Mammary epithelial cell (primary cell): ENCODE measurements at regions of chr7 and their contacts with region 1.

Region 1: GRCh38 chr7:44847508-44847920 is 373 bp downstream of the H2AZ2 start:
- DNase-seq: peak; percentile 83
- H3K4me3 ChIP-seq: peak overlapping the region; percentile 55 to 96 (median 94)
- H3K27ac ChIP-seq: peak overlapping the region; percentile 84
- H3K4me1 ChIP-seq: peaks cover 5% of the 10 kb centered on the region
- H3K27me3 ChIP-seq: no peaks in the 10 kb centered on the region
- CTCF ChIP-seq: peak; percentile 47 to 96

Region 2: DNA sequence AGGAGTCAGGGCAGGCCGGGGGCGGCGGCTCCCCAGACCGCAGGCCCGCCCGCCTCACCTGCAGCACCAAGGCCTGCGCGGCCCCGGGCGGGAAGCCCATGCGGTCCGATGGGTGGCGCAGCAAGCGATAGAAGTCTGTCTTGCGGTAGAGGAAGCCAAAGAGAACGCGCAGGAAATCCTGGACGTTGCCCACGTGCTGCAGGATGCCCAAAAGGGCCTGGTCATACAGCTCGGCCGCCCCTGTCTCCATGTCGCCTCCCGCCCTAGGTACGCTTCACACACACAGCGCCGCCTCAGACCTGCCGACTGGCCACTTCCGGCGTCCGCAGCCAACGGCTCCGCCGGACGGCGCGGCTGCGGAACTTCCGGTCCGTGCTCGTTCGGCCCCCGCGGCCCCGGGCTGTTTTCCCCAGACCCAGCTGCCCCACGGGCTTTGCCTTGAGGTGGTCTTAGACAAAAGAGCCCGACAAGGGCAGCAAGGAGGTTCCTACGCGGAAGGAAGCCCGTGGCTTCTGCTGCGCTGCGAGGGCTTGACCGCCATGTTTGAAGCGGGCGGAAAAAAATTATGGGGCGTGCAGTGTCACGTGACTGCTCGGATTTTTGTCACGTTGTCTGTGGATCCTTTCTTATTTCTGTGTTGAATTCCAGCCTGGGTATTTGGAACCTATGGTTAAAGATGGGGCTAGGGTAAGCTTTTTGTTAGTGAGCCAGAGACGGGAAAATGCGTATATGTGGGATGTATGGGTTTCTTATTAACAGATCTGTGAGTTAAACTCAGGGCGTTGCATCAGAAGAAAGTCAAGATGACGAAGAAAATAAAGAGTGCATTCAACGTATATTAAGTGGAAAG is 356.9 kb before region 1 on chr7 and contains the start of gene NUDCD3:
- CTCF ChIA-PET with region 1: no interaction called
- dilution Hi-C with region 1: no loop called
- in situ Hi-C with region 1: no loop called
- intact Hi-C with region 1: loop called (anchors 10 kb)
- DNase-seq: peak; percentile 87
- H3K4me3 ChIP-seq: peak within 1 kb of the TSS; percentile 68 to 87 (median 83)
- H3K27ac ChIP-seq: peak within 1 kb of the TSS; percentile 97
- H3K4me1 ChIP-seq: peaks cover 19% of the 10 kb centered on the region
- H3K27me3 ChIP-seq: no peaks in the 10 kb centered on the region
- CTCF ChIP-seq: peak in 1 of 2 donors; percentile 32
- total RNA-seq, gene NUDCD3: 77.2 to 122 TPM

Region 3: DNA sequence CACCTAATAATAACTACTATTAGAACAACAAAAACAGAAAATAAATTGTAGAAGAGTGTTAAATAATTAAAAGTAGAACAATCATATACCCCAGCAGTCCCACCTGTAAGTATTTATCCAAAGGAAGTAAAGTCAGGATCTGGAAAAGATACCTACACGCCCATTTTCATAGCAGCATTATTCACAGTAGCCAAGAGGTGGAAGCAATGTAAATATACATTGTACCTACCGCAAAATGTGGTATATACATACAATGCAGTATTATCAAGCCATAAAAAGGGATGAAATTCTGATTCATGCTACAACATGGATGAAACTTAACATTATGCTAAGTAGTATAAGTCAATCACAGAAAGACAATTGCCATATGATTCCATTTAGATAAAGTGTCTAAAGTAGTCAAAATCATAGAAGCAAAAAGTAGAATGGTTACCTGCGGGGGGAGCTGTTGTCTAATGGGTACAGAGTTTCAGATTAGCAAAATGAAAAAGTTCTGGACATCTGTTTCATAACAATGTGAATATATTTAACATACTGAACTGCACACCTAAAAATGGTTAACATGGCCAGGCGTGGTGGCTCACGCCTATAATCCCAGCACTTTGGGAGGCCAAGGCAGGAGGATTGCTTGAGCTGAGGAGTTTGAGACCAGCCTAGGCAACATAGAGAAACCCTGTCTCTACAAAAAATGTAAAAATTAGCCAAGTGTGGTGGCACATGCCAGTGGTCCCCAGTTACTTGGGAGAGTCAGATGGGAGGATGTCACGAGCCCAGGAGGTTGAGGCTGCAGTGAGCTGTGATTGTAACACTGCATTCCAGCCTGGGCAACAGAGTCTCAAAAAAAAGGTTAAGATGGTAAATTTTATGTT is 259.4 kb before region 1 on chr7:
- CTCF ChIA-PET with region 1: no interaction called
- dilution Hi-C with region 1: no loop called
- in situ Hi-C with region 1: loop called (anchors 10 to 25 kb)
- intact Hi-C with region 1: loop called (anchors 1 kb)
- DNase-seq: peak; percentile 51
- H3K4me3 ChIP-seq: no peak overlapping the region
- H3K27ac ChIP-seq: no peak overlapping the region
- H3K4me1 ChIP-seq: peaks cover under 1% of the 10 kb centered on the region
- H3K27me3 ChIP-seq: no peaks in the 10 kb centered on the region
- CTCF ChIP-seq: peak; percentile 54 to 71

Region 4: DNA sequence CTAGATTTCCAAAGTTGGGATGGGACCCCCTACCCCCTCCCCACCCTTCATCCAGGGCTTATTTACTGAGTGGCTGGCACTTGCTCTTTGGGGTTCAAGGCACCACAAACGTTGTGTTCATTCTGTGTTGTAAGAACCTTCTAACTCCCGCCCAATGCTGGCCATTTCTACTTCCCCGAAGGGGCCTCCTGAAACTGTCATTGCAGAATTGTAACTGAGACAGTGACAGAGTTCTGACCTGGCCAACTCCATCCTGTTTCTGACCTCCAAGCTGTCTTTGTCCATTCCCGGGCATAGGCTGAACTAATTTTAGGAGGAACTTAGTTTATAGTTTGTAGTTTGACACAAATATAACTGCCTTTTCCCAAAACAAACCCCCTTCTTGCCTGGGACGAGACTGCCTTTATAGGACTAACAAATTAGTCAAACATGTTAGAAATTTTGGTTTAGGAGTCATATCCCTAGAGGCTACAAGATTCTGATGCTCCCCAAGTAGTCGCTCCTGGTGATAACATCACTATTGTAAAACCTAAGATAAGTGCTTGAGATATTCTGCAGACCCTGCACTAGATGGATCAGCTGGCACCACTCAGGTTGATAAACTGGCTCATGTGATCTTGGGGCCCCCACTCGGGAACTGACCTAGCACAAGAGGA is 133.7 kb before region 1 on chr7:
- CTCF ChIA-PET with region 1: no interaction called
- dilution Hi-C with region 1: no loop called
- in situ Hi-C with region 1: no loop called
- intact Hi-C with region 1: no loop called
- DNase-seq: no peak
- H3K4me3 ChIP-seq: no peak overlapping the region
- H3K27ac ChIP-seq: no peak overlapping the region
- H3K4me1 ChIP-seq: no peaks in the 10 kb centered on the region
- H3K27me3 ChIP-seq: no peaks in the 10 kb centered on the region
- CTCF ChIP-seq: no peak

Region 5: DNA sequence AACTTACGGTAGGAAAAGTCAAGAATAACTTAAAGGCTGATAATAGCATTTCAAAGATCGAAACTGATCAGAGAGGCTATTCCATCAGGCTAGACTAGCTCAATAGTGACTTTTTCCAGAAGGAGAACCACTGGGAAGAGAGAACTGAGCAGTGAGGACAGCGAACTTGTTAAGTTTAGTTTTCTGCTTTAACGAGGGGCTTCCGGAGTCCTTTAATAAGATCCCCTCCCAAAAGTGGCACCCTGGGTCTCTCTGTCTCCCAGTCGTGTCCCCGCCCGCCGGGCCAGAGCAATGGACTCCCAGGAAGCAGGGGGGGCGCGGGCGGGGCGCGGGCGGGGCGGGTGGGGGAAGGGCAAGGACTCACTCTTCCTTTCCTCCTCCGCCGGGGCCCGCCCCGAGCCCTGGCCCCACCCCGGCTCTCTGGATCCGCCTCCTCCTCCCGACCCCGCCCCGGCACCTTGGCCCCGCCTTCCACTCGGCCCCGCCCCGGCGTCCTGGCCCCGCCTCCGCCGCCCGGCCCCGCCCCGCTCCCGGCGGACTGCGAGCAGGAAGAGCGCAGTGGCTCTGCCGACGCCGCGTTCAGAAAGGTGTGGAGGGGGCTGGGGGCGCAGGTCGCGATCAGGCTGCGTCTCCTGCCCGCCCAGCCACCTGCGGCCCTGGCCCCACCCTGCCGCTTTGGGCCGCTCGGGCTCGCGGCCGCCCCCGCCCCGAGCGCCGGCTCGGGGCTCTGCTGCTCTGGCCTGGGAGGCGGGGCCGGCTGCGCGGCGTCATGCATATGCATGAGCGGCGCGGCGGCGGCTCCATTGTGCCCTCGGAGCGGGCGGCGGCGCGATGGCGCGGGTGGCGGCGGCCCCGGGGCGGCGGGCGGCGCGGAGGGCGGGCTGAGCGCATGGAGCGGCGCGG is 99.2 kb before region 1 on chr7 and contains the start of gene ZMIZ2:
- CTCF ChIA-PET with region 1: no interaction called
- dilution Hi-C with region 1: no loop called
- in situ Hi-C with region 1: no loop called
- intact Hi-C with region 1: loop called (anchors 2 kb)
- DNase-seq: peak; percentile 83
- H3K4me3 ChIP-seq: peak within 1 kb of the TSS; percentile 44 to 97 (median 91)
- H3K27ac ChIP-seq: peak within 1 kb of the TSS; percentile 66
- H3K4me1 ChIP-seq: peaks cover 27% of the 10 kb centered on the region
- H3K27me3 ChIP-seq: no peaks in the 10 kb centered on the region
- CTCF ChIP-seq: no peak
- total RNA-seq, gene ZMIZ2: 8.0 to 55.6 TPM

Region 6: GRCh38 chr7:44805950-44806349 is 41.6 kb before region 1 on chr7:
- CTCF ChIA-PET with region 1: no interaction called
- dilution Hi-C with region 1: no loop called
- in situ Hi-C with region 1: no loop called
- intact Hi-C with region 1: no loop called
- DNase-seq: no peak
- H3K4me3 ChIP-seq: no peak overlapping the region
- H3K27ac ChIP-seq: no peak overlapping the region
- H3K4me1 ChIP-seq: peaks cover 9% of the 10 kb centered on the region
- H3K27me3 ChIP-seq: no peaks in the 10 kb centered on the region
- CTCF ChIP-seq: no peak

Region 7: GRCh38 chr7:44875241-44875640 is 27.7 kb after region 1 on chr7:
- CTCF ChIA-PET with region 1: no interaction called
- dilution Hi-C with region 1: no loop called
- in situ Hi-C with region 1: no loop called
- intact Hi-C with region 1: no loop called
- DNase-seq: no peak
- H3K4me3 ChIP-seq: no peak overlapping the region
- H3K27ac ChIP-seq: no peak overlapping the region
- H3K4me1 ChIP-seq: peaks cover 6% of the 10 kb centered on the region
- H3K27me3 ChIP-seq: no peaks in the 10 kb centered on the region
- CTCF ChIP-seq: no peak

Region 8: GRCh38 chr7:44921607-44922359 is 74.3 kb after region 1 on chr7:
- CTCF ChIA-PET with region 1: no interaction called
- dilution Hi-C with region 1: no loop called
- in situ Hi-C with region 1: no loop called
- intact Hi-C with region 1: loop called (anchors 2 kb)
- DNase-seq: peak; percentile 44
- H3K4me3 ChIP-seq: no peak overlapping the region
- H3K27ac ChIP-seq: no peak overlapping the region
- H3K4me1 ChIP-seq: no peaks in the 10 kb centered on the region
- H3K27me3 ChIP-seq: peaks cover 2% of the 10 kb centered on the region
- CTCF ChIP-seq: peak; percentile 73 to 90

Region 9: DNA sequence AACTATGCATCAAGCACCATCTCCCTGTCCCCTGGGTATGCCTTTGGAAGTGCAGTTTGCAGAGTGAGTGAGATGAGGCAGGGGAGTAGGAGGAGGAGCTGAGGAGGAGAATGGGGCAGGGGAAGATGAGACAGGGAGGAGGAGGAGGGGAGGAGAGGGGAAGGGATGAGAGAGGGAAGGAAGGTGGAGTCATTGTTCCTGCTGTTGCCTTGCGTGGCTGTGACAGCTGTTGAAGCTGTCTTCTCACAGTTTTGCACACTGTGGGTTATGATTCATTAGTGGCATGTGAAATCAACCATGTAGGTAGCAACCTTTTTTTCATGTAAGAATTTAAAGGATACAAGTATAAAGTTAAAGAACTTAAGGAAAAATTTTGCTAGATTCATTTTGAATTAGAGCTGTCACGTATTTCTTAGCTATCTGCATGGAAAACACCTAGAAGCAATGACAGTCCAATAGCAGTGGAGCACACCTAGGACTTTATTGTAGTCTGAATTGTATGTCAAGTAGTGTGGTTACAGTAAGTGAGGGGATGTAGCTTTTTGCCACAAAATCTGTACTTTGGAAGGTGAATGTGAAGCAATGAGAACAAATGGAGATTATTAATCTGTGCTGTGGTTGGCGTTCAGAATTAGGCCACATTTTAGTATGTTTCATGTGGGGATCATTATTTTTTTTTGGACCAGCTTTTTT is 174.2 kb after region 1 on chr7:
- CTCF ChIA-PET with region 1: no interaction called
- dilution Hi-C with region 1: no loop called
- in situ Hi-C with region 1: no loop called
- intact Hi-C with region 1: no loop called
- DNase-seq: peak; percentile 51
- H3K4me3 ChIP-seq: no peak overlapping the region
- H3K27ac ChIP-seq: no peak overlapping the region
- H3K4me1 ChIP-seq: peaks cover 27% of the 10 kb centered on the region
- H3K27me3 ChIP-seq: no peaks in the 10 kb centered on the region
- CTCF ChIP-seq: no peak